ENCODE measurements at regions of chr7 and their contacts with region 1.

Region 1: DNA sequence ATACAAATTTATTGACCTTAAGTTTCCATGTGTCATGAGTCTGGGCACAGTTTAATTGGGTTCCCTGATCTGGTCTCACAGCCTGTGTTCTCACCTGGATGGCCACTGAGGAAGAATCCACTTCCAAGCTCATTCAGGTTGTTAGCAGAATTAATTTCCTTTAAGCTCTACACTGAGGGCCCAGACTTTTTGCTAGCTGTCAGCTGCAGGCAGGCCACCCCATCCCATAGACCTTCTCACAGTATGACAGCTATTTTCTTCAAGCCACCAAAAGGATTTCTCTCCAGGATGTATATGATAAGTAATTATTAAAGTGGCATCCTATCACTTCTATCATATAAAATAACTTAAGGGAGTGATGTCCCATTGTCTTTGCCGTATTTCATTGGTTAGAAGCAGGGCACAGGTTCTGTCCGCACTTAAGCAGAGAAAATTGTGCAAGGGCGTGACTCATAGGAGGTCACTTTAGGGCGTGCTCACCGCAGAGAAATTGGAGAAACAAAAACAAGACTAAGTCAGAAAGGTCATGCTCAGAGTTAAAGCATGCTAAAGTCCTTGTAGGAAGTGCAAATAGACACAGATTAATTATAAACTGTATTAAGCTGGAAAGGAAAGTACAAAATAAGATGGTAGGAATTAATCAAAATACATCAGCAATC is 109.9 kb downstream of the AHR start:
- DNase-seq: peak; percentile 92 to 96 (median 95)
- H3K4me3 ChIP-seq: peak overlapping the region in 1 of 3 experiments; percentile 7
- H3K4me3 Mint-ChIP-seq: peak overlapping the region in 1 of 2 donors; percentile 46
- H3K27ac ChIP-seq: peak overlapping the region; percentile 80 to 89
- H3K27ac Mint-ChIP-seq: peak overlapping the region; percentile 87 to 98 (median 97)
- H3K4me1 ChIP-seq: peaks cover 35 to 45% of the 10 kb centered on the region in 2 donors
- H3K4me1 Mint-ChIP-seq: peaks cover 40% of the 10 kb centered on the region
- H3K27me3 ChIP-seq: no peaks in the 10 kb centered on the region
- H3K27me3 Mint-ChIP-seq: no peaks in the 10 kb centered on the region
- CTCF ChIP-seq: no peak

Region 2: DNA sequence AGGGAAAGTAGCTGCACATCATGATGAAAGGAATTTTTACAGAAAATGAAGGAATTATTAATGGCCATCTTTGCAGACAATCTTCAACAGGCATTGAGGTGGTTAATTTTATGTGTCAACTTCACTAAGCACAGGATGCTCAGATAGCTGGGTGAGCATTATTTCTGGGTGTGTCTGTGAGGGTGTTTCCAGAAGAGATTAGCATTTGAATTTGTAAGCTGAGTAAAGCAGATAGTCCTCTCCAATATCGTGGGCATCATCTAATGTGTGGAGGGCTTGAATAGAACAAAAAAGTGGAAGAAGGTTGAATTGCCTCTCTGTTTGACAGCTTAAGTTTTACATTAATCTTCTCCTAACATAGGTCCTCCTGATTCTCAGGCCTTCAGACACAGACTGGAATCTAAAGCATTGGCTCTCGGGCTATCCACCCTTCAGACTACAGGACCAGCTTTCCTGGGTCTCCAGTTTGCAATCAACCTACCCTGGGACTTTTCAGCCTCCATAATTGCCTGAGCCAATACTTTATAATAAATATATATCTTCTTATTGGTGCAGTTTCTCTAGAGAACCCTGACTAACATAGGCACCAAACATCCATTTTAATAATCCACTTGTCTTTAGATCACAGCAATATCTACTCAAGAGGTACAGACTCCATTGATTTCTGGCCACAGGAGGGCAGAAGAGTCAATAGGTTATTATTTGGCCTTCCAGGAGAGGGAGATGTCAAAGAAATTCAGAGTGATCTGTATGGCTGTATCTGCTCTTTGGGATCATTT is 976.5 kb before region 1 on chr7:
- intact Hi-C with region 1: no loop called
- DNase-seq: no peak
- H3K4me3 ChIP-seq: no peak overlapping the region
- H3K4me3 Mint-ChIP-seq: no peak overlapping the region
- H3K27ac ChIP-seq: no peak overlapping the region
- H3K27ac Mint-ChIP-seq: no peak overlapping the region
- H3K4me1 ChIP-seq: no peaks in the 10 kb centered on the region
- H3K4me1 Mint-ChIP-seq: peaks cover 9% of the 10 kb centered on the region
- H3K27me3 ChIP-seq: no peaks in the 10 kb centered on the region
- H3K27me3 Mint-ChIP-seq: peaks cover 0 to 2% (median 2%) of the 10 kb centered on the region in 3 donors
- CTCF ChIP-seq: peak; percentile 19

Region 3: DNA sequence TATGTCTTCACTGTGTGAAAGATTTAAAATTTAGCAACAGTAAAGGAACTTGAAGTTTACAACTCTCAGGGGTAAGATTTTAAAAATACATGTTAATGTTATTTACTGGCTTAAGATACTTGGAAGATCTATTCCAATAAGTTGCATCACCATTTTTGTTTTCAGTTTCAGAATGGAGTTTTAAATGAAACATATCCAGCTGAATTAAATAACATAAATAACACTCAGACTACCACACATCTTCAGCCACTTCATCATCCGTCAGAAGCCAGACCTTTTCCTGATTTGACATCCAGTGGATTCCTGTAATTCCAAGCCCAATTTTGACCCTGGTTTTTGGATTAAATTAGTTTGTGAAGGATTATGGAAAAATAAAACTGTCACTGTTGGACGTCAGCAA is 65.6 kb before region 1 on chr7:
- intact Hi-C with region 1: loop called in 1 of 2 experiments (anchors 10 kb)
- DNase-seq: no peak
- H3K4me3 ChIP-seq: no peak overlapping the region
- H3K4me3 Mint-ChIP-seq: no peak overlapping the region
- H3K27ac ChIP-seq: no peak overlapping the region
- H3K27ac Mint-ChIP-seq: no peak overlapping the region
- H3K4me1 ChIP-seq: no peaks in the 10 kb centered on the region
- H3K4me1 Mint-ChIP-seq: no peaks in the 10 kb centered on the region
- H3K27me3 ChIP-seq: no peaks in the 10 kb centered on the region
- H3K27me3 Mint-ChIP-seq: no peaks in the 10 kb centered on the region
- CTCF ChIP-seq: no peak

Region 4: DNA sequence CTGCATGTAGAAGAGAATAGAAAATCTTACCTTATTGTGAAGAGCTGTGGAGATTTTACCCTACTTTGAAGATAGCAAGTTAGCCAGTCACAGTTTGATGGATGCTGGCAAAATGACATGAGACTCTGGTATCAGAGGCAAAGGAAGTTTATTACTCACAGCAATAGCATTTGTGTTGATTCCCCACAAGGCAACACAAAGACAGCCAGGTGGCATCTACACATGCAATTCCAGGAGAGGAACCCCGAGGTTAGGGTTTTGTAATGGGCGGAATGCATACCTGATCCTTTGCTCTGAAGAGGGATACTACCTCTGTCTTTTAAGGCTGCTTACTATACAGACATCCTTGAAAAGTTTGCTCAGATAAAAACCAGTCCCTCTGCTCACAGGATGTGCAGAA is 50.4 kb before region 1 on chr7:
- intact Hi-C with region 1: loop called in 1 of 2 experiments (anchors 10 kb)
- DNase-seq: no peak
- H3K4me3 ChIP-seq: no peak overlapping the region
- H3K4me3 Mint-ChIP-seq: no peak overlapping the region
- H3K27ac ChIP-seq: no peak overlapping the region
- H3K27ac Mint-ChIP-seq: no peak overlapping the region
- H3K4me1 ChIP-seq: no peaks in the 10 kb centered on the region
- H3K4me1 Mint-ChIP-seq: peaks cover 2% of the 10 kb centered on the region
- H3K27me3 ChIP-seq: no peaks in the 10 kb centered on the region
- H3K27me3 Mint-ChIP-seq: peaks cover 0 to 4% (median 0%) of the 10 kb centered on the region in 3 donors
- CTCF ChIP-seq: no peak

Region 5: GRCh38 chr7:17370092-17370491 is 38.3 kb before region 1 on chr7:
- intact Hi-C with region 1: loop called (anchors 5 kb)
- DNase-seq: peak; percentile 79 to 95 (median 85)
- H3K4me3 ChIP-seq: peak overlapping the region in 1 of 3 experiments; percentile 46
- H3K4me3 Mint-ChIP-seq: peak overlapping the region in 1 of 2 donors; percentile 72
- H3K27ac ChIP-seq: peak overlapping the region; percentile 77 to 92
- H3K27ac Mint-ChIP-seq: peak overlapping the region; percentile 89 to 99 (median 97)
- H3K4me1 ChIP-seq: peaks cover 32 to 38% of the 10 kb centered on the region in 2 donors
- H3K4me1 Mint-ChIP-seq: peaks cover 39% of the 10 kb centered on the region
- H3K27me3 ChIP-seq: no peaks in the 10 kb centered on the region
- H3K27me3 Mint-ChIP-seq: peaks cover 0 to 2% (median 1%) of the 10 kb centered on the region in 3 donors
- CTCF ChIP-seq: no peak

Region 6: GRCh38 chr7:17530741-17531417 is 122.5 kb after region 1 on chr7:
- intact Hi-C with region 1: loop called in 1 of 2 experiments (anchors 10 kb)
- DNase-seq: no peak
- H3K4me3 ChIP-seq: no peak overlapping the region
- H3K4me3 Mint-ChIP-seq: no peak overlapping the region
- H3K27ac ChIP-seq: no peak overlapping the region
- H3K27ac Mint-ChIP-seq: no peak overlapping the region
- H3K4me1 ChIP-seq: peaks cover 17 to 25% of the 10 kb centered on the region in 2 donors
- H3K4me1 Mint-ChIP-seq: peaks cover 28% of the 10 kb centered on the region
- H3K27me3 ChIP-seq: no peaks in the 10 kb centered on the region
- H3K27me3 Mint-ChIP-seq: no peaks in the 10 kb centered on the region
- CTCF ChIP-seq: peak; percentile 16

Measured in CD14-positive monocyte (primary cell).